CD4-positive, alpha-beta memory T cell (primary cell): ENCODE measurements at regions of chr1 and their contacts with region 1.

Region 1: DNA sequence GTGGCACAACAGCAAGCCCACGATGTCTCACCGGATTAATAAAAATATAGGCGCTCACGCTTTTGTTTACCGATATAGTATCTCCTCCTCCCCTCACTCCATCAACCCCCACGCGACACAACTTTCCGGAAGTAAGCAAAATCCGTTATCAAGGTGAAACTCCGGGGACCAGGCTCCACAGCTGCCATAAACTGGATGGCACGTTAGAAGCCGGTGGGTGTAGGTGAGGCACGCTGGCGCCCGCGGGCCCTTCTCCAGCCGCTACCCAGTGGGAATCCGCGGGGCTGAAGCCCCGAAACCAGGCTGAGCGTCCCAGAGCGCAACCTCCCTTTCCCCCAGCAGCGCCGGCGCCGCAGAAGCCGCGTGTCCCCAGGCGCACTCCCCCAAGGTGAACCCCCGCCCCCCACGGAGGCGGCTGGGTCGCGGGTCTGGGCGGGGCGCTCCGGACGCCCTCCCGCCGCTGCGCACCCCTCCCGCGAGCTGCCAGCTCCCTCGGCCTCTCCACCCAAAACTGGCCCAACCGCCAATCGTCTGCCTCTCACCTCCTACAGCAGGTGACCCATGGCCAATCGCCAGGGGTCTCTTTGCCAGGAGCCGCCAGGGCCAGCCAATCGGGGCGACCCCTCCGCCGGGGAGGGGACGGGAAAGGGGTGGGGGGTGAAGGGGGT is 112.4 kb downstream of the OSBPL9 start:
- DNase-seq: peak; percentile 92 to 94 (median 93)
- H3K4me3 ChIP-seq: peak overlapping the region; percentile 89 to 96
- H3K4me3 Mint-ChIP-seq: peak overlapping the region; percentile 94 to 97 (median 94)
- H3K27ac ChIP-seq: peak overlapping the region; percentile 68
- H3K27ac Mint-ChIP-seq: peak overlapping the region; percentile 67 to 96 (median 94)
- H3K4me1 ChIP-seq: peaks cover 37% of the 10 kb centered on the region
- H3K4me1 Mint-ChIP-seq: peaks cover 30 to 54% (median 39%) of the 10 kb centered on the region in 4 donors
- H3K27me3 ChIP-seq: no peaks in the 10 kb centered on the region
- H3K27me3 Mint-ChIP-seq: no peaks in the 10 kb centered on the region

Region 2: GRCh38 chr1:50959913-50960844 is 769.1 kb before region 1 on chr1 and contains the start of gene FAF1:
- CTCF ChIA-PET with region 1: no interaction called
- POLR2A ChIA-PET with region 1: no interaction called
- intact Hi-C with region 1: loop called (anchors 10 kb)
- DNase-seq: peak; percentile 97 to 98 (median 98)
- H3K4me3 ChIP-seq: peak within 1 kb of the TSS; percentile 89 to 91
- H3K4me3 Mint-ChIP-seq: peak within 1 kb of the TSS; percentile 93 to 99 (median 96)
- H3K27ac ChIP-seq: peak within 1 kb of the TSS; percentile 63
- H3K27ac Mint-ChIP-seq: peak within 1 kb of the TSS; percentile 90 to 98 (median 97)
- H3K4me1 ChIP-seq: peaks cover 13% of the 10 kb centered on the region
- H3K4me1 Mint-ChIP-seq: peaks cover 16 to 26% (median 21%) of the 10 kb centered on the region in 4 donors
- H3K27me3 ChIP-seq: no peaks in the 10 kb centered on the region
- H3K27me3 Mint-ChIP-seq: no peaks in the 10 kb centered on the region
- total RNA-seq, gene FAF1: 50.0 to 57.7 TPM

Region 3: DNA sequence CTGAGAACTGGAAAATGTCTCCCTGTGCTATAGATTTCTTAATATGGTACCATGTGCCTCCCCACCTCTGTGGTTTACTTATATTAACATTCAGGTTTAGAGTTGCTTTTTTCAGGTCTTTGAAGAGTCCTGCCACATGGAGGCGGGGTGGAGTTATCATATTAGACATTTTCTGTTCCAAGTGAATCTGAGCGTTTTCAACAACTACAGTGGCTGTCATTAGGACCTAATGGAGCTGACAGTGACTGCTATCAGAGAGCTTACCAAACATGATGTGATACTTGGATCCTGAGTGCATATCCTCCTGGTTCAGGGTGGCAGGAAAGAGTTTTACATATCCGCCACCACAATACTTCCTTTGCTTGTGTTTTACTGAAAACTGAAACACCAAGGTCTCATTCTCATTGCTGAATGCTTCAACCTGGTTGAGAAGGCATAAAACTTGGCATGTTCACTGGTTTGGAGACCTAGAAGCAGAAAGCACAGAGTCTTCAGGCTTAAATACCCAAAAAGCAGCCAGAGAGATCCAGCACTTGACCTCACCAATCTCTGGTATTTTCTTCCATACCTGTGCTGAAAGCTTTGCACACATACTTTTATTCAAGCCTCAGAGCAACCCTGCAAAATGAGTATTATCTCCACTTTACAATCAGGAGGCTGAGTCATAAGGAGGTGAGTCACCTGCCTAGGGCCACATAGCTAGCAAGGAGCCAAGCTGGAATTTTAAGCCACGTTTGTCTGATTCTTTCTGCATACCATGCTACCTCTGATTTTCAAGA is 159.8 kb before region 1 on chr1:
- CTCF ChIA-PET with region 1: no interaction called
- POLR2A ChIA-PET with region 1: interaction called, 3 read pairs
- intact Hi-C with region 1: loop called (anchors 2 kb)
- DNase-seq: peak; percentile 38 to 68 (median 45)
- H3K4me3 ChIP-seq: peak overlapping the region in 1 of 2 donors; percentile 33
- H3K4me3 Mint-ChIP-seq: peak overlapping the region; percentile 40 to 81 (median 56)
- H3K27ac ChIP-seq: peak overlapping the region; percentile 27
- H3K27ac Mint-ChIP-seq: peak overlapping the region; percentile 76 to 90 (median 85)
- H3K4me1 ChIP-seq: peaks cover 44% of the 10 kb centered on the region
- H3K4me1 Mint-ChIP-seq: peaks cover 22 to 43% (median 34%) of the 10 kb centered on the region in 4 donors
- H3K27me3 ChIP-seq: no peaks in the 10 kb centered on the region
- H3K27me3 Mint-ChIP-seq: no peaks in the 10 kb centered on the region

Region 4: GRCh38 chr1:51616901-51617708 is 112.2 kb before region 1 on chr1 and contains the start of gene OSBPL9:
- CTCF ChIA-PET with region 1: no interaction called
- POLR2A ChIA-PET with region 1: interaction called, 9 read pairs
- intact Hi-C with region 1: loop called (anchors 1 kb)
- DNase-seq: peak; percentile 84 to 91 (median 87)
- H3K4me3 ChIP-seq: peak within 1 kb of the TSS; percentile 76 to 79
- H3K4me3 Mint-ChIP-seq: peak within 1 kb of the TSS; percentile 100
- H3K27ac ChIP-seq: peak within 1 kb of the TSS; percentile 72
- H3K27ac Mint-ChIP-seq: peak within 1 kb of the TSS; percentile 93 to 100 (median 99)
- H3K4me1 ChIP-seq: peaks cover 32% of the 10 kb centered on the region
- H3K4me1 Mint-ChIP-seq: peaks cover 24 to 49% (median 37%) of the 10 kb centered on the region in 4 donors
- H3K27me3 ChIP-seq: no peaks in the 10 kb centered on the region
- H3K27me3 Mint-ChIP-seq: peaks cover under 1 to 1% of the 10 kb centered on the region in 2 donors
- total RNA-seq, gene OSBPL9: 45.1 to 46.9 TPM

Region 5: GRCh38 chr1:51776408-51776807 is 47.1 kb after region 1 on chr1:
- CTCF ChIA-PET with region 1: no interaction called
- POLR2A ChIA-PET with region 1: no interaction called
- intact Hi-C with region 1: no loop called
- DNase-seq: no peak
- H3K4me3 ChIP-seq: no peak overlapping the region
- H3K4me3 Mint-ChIP-seq: no peak overlapping the region
- H3K27ac ChIP-seq: no peak overlapping the region
- H3K27ac Mint-ChIP-seq: peak overlapping the region in 2 of 7 donors; percentile 3 to 25
- H3K4me1 ChIP-seq: no peaks in the 10 kb centered on the region
- H3K4me1 Mint-ChIP-seq: peaks cover 0 to 8% (median 2%) of the 10 kb centered on the region in 4 donors
- H3K27me3 ChIP-seq: no peaks in the 10 kb centered on the region
- H3K27me3 Mint-ChIP-seq: no peaks in the 10 kb centered on the region